ENCODE measurements at regions of chr16 and their contacts with region 1.

Region 1: GRCh38 chr16:1308977-1309885 is at the start of gene UBE2I:
- DNase-seq: peak; percentile 96
- ATAC-seq: peak; percentile 90
- total RNA-seq, gene UBE2I: 89.4 TPM

Region 2: GRCh38 chr16:1351582-1352362 is 42.5 kb after region 1 on chr16 and contains the starts of genes GNPTG and TSR3:
- intact Hi-C with region 1: loop called (anchors 5 kb)
- DNase-seq: peak; percentile 93
- ATAC-seq: peak; percentile 78
- total RNA-seq, gene GNPTG: 35.0 TPM
- total RNA-seq, gene TSR3: 54.6 TPM

Region 3: DNA sequence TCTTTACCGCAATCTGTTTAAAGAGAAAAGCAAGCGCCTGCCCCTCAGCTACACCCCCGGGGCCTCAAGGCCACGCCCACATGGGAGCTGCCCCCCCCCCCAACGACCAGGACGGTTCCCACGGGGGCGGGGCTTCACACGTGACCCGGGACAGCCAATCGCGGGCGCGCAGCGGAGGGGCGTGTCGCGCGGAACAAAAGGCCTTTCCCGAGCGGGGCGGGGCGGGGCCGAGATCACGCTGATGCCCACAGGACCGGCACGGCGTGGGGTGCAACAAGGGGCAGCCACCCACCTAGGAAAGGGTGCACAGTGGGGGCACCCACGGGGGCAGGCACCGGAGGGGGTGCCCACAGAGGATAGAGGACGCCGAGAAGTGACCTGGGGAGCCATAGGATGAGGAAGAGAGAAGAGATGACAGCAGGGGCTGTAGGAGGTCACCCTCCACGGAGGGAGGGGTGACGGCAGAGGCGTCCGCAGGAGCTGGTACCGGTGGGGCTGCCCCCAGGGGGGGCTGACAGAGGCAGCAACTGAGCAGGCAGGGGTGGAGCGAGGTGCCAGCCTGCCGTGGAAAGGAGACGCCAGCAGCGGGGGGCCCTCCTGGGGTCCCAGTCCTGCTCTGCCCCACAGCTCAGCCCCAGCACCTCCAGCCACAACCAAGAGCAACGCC is 99.1 kb after region 1 on chr16:
- intact Hi-C with region 1: loop called (anchors 5 kb)
- DNase-seq: peak; percentile 95
- ATAC-seq: peak; percentile 97

Measured in Right ventricle myocardium inferior (tissue), 1 donor.